Heart left ventricle (tissue), 16 donors: ENCODE measurements at regions of chr15 and their contacts with region 1.

Region 1: DNA sequence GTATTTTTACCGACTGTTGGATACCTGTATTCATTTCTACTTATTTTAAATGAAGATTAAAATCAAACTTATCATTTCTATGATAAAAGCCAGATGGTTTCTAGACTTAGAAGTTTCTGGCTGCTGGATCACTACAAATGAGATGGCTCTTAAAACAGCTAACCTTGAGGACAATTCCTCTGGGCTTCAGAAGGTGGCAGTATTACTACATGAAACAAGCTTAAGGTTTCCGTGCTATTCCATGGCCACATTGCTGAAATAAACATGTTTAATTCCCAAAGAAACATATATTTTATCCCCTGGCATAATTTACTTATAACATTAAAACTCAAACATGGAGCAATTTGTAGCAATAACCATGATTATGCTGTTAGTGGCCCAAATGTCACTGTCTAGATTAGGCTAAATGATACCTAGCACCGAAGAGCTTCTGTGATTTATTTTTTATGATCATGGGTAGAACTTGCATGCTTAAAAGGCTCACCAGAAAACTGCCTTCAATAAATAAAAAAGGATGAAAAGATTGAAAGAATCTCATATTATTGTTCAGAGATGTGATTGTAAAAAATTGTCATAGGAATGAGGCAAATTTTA is 204.0 kb upstream of the NANOGP8 start:
- DNase-seq: no peak
- ATAC-seq: peak in 3 of 4 donors; percentile 37 to 69 (median 58)
- H3K4me3 ChIP-seq: no peak overlapping the region
- H3K27ac ChIP-seq: no peak overlapping the region
- H3K4me1 ChIP-seq: no peaks in the 10 kb centered on the region
- H3K27me3 ChIP-seq: no peaks in the 10 kb centered on the region
- CTCF ChIP-seq: peak; percentile 48 to 83 (median 73)
- POLR2A ChIP-seq: no peak

Region 2: DNA sequence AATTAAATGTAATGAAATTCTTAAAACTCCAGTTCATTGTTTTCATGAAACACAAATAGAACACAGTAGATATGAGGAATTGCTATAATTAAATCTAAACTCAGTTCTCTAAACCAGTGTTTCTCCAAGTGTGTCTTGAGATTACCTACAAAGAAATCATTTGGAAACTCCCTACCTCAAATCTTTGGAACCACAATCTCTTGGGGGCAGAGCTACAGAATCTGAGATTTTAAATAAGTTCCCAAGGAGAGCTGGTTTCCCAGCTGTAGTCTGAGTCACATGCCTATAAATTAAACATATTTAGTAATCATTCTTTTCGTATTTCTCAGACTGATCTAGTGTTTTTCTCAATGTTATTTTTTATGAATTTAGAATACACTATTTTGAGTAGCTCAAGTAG is 476.8 kb before region 1 on chr15:
- intact Hi-C with region 1: no loop called
- DNase-seq: no peak
- ATAC-seq: no peak
- H3K4me3 ChIP-seq: no peak overlapping the region
- H3K27ac ChIP-seq: peak overlapping the region in 1 of 12 donors; percentile 17
- H3K4me1 ChIP-seq: peaks cover 0 to 15% (median 3%) of the 10 kb centered on the region in 12 donors
- H3K27me3 ChIP-seq: no peaks in the 10 kb centered on the region
- CTCF ChIP-seq: no peak
- POLR2A ChIP-seq: no peak

Region 3: DNA sequence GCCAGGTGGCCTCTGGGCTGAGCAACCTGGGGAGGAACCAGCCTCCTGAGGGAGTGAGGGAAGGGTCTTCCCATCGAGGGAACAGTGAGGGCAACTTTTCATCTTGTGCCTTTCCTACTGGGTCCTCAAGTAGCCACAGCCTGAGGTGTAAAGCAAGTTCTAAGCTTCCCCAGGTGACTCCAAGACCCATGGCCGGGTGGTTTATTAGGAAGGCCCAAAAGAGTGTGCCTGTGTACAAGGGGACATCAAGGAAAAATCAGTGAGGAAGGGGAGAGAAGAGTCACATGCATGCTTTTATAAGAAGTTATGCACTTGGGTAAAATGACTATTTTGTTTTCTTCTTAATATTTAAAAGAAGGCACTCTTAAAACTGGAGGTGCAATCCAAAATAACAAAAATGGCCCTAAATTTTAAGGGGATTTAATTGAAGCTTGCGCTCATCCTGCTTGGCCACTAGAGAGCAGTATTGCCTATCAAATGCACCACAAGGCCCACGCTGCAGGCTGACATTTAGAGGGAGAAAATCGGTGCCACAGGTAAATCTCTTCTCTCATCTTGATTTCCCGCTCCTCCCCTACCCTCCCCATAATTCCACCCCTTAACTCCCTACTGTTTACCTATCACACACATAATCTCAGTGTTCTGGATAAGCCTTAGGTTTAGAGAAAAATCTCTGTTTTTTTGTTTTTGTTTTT is 210.8 kb before region 1 on chr15:
- intact Hi-C with region 1: loop called in 1 of 10 experiments (anchors 5 kb)
- DNase-seq: no peak
- ATAC-seq: peak; percentile 49 to 64 (median 59)
- H3K4me3 ChIP-seq: no peak overlapping the region
- H3K27ac ChIP-seq: no peak overlapping the region
- H3K4me1 ChIP-seq: no peaks in the 10 kb centered on the region
- H3K27me3 ChIP-seq: no peaks in the 10 kb centered on the region
- CTCF ChIP-seq: peak; percentile 53 to 80 (median 71)
- POLR2A ChIP-seq: no peak

Region 4: DNA sequence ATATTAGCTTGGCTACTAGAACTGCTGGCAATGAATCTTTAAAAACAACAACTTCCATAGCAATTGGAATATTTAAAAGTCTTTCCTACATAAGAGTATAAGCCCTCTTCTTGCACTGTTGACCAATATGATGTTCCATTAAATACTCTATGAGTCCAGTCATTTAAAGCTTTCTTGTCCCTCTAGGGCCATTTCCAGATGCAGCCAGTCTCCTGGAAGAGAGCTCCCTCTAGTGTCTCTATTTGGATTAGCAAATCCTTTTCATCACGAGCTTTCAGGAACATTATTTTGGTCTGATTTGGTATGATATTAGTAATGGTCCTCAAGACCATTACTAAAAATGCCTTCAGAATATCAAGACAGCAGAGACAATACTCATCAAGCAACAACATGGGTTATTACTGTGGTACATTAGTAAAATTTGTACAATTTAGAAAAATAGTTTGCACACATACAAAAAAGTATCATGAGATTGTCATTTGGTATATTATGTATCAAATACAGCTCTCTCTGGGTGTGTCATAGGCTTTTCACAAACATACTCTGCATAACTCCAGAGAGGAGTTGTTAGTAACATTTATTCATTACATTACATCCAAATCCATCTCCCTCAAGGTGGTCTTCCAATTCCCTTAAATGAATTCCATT is 155.6 kb after region 1 on chr15:
- intact Hi-C with region 1: loop called (anchors 1 to 5 kb)
- DNase-seq: no peak
- ATAC-seq: peak in 1 of 4 donors; percentile 39
- H3K4me3 ChIP-seq: no peak overlapping the region
- H3K27ac ChIP-seq: no peak overlapping the region
- H3K4me1 ChIP-seq: no peaks in the 10 kb centered on the region
- H3K27me3 ChIP-seq: no peaks in the 10 kb centered on the region
- CTCF ChIP-seq: peak; percentile 65 to 86 (median 78)
- POLR2A ChIP-seq: no peak

Region 5: GRCh38 chr15:35912196-35912595 is 623.1 kb after region 1 on chr15:
- intact Hi-C with region 1: loop called in 1 of 10 experiments (anchors 10 kb)
- DNase-seq: no peak
- ATAC-seq: peak; percentile 55 to 82 (median 76)
- H3K4me3 ChIP-seq: no peak overlapping the region
- H3K27ac ChIP-seq: no peak overlapping the region
- H3K4me1 ChIP-seq: peaks cover 0 to 10% (median 0%) of the 10 kb centered on the region in 12 donors
- H3K27me3 ChIP-seq: no peaks in the 10 kb centered on the region
- CTCF ChIP-seq: peak in 10 of 12 donors; percentile 21 to 54 (median 38)
- POLR2A ChIP-seq: no peak